MCF 10A (cell line): ENCODE measurements at regions of chr11 and their contacts with region 1.

Region 1: GRCh38 chr11:33996498-33997454 is 54.8 kb upstream of the CAPRIN1 start:
- DNase-seq: peak; percentile 85
- H3K4me3 Mint-ChIP-seq: peak overlapping the region; percentile 15
- H3K27ac Mint-ChIP-seq: no peak overlapping the region
- H3K4me1 Mint-ChIP-seq: peaks cover 12% of the 10 kb centered on the region
- H3K27me3 Mint-ChIP-seq: no peaks in the 10 kb centered on the region
- CTCF ChIP-seq: peak; percentile 76

Region 2: GRCh38 chr11:33949252-33949913 is 47.4 kb before region 1 on chr11:
- CTCF ChIA-PET with region 1: no interaction called
- POLR2A ChIA-PET with region 1: no interaction called
- intact Hi-C with region 1: no loop called
- DNase-seq: no peak
- H3K4me3 Mint-ChIP-seq: no peak overlapping the region
- H3K27ac Mint-ChIP-seq: no peak overlapping the region
- H3K4me1 Mint-ChIP-seq: no peaks in the 10 kb centered on the region
- H3K27me3 Mint-ChIP-seq: no peaks in the 10 kb centered on the region
- CTCF ChIP-seq: no peak

Region 3: DNA sequence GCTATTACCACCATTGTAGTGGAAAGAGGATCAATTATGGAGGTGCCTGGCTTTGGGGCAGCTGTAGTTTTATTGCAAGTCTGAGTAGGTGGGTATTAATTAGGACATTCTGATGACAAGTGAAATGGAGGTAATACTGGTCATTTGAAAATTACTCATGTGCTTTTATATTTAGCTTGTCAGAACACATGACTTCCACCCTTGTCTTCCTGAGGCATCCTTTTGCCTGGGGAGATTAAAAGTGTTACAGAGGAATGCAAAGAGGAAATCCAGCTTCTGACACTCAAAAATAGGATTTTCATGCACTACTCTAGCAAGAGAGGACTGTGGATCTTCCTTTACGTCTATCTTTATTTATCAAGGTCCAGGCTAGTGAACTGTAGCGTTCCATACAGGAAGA is 10.1 kb after region 1 on chr11:
- CTCF ChIA-PET with region 1: interaction called, 42 read pairs
- POLR2A ChIA-PET with region 1: interaction called, 5 read pairs
- intact Hi-C with region 1: no loop called
- DNase-seq: no peak
- H3K4me3 Mint-ChIP-seq: no peak overlapping the region
- H3K27ac Mint-ChIP-seq: no peak overlapping the region
- H3K4me1 Mint-ChIP-seq: no peaks in the 10 kb centered on the region
- H3K27me3 Mint-ChIP-seq: peaks cover 16% of the 10 kb centered on the region
- CTCF ChIP-seq: no peak

Region 4: GRCh38 chr11:34051349-34052035 is 54.7 kb after region 1 on chr11 and contains the start of gene CAPRIN1:
- CTCF ChIA-PET with region 1: interaction called, 17 read pairs
- POLR2A ChIA-PET with region 1: interaction called, 37 read pairs
- intact Hi-C with region 1: loop called (anchors 1 kb)
- DNase-seq: peak; percentile 86
- H3K4me3 Mint-ChIP-seq: peak within 1 kb of the TSS; percentile 99
- H3K27ac Mint-ChIP-seq: peak within 1 kb of the TSS; percentile 96
- H3K4me1 Mint-ChIP-seq: peaks cover 17% of the 10 kb centered on the region
- H3K27me3 Mint-ChIP-seq: no peaks in the 10 kb centered on the region
- CTCF ChIP-seq: no peak
- total RNA-seq, gene CAPRIN1: 190 and 219 TPM in 2 replicates

Region 5: GRCh38 chr11:34068111-34068510 is 71.3 kb after region 1 on chr11:
- CTCF ChIA-PET with region 1: interaction called, 30 read pairs
- POLR2A ChIA-PET with region 1: interaction called, 3 read pairs
- intact Hi-C with region 1: no loop called
- DNase-seq: peak; percentile 25
- H3K4me3 Mint-ChIP-seq: no peak overlapping the region
- H3K27ac Mint-ChIP-seq: peak overlapping the region; percentile 27
- H3K4me1 Mint-ChIP-seq: peaks cover 18% of the 10 kb centered on the region
- H3K27me3 Mint-ChIP-seq: no peaks in the 10 kb centered on the region
- CTCF ChIP-seq: no peak

Region 6: GRCh38 chr11:34105079-34105956 is 108.5 kb after region 1 on chr11 and contains the start of gene NAT10:
- CTCF ChIA-PET with region 1: interaction called, 7 read pairs
- POLR2A ChIA-PET with region 1: interaction called, 15 read pairs
- intact Hi-C with region 1: loop called (anchors 1 kb)
- DNase-seq: peak; percentile 98
- H3K4me3 Mint-ChIP-seq: peak within 1 kb of the TSS; percentile 97
- H3K27ac Mint-ChIP-seq: peak within 1 kb of the TSS; percentile 96
- H3K4me1 Mint-ChIP-seq: peaks cover 24% of the 10 kb centered on the region
- H3K27me3 Mint-ChIP-seq: no peaks in the 10 kb centered on the region
- CTCF ChIP-seq: no peak
- total RNA-seq, gene NAT10: 68.9 and 89.5 TPM in 2 replicates

Region 7: GRCh38 chr11:34357701-34358257 is 361.0 kb after region 1 on chr11 and contains the start of gene ABTB2:
- CTCF ChIA-PET with region 1: interaction called, 6 read pairs
- POLR2A ChIA-PET with region 1: no interaction called
- intact Hi-C with region 1: loop called (anchors 1 kb)
- DNase-seq: peak; percentile 95
- H3K4me3 Mint-ChIP-seq: peak within 1 kb of the TSS; percentile 74
- H3K27ac Mint-ChIP-seq: no peak within 1 kb of the TSS
- H3K4me1 Mint-ChIP-seq: peaks cover 8% of the 10 kb centered on the region
- H3K27me3 Mint-ChIP-seq: no peaks in the 10 kb centered on the region
- CTCF ChIP-seq: no peak
- total RNA-seq, gene ABTB2: 2.9 and 3.1 TPM in 2 replicates